Heart right ventricle (tissue), 16 donors: ENCODE measurements at regions of chr7 and their contacts with region 1.

Region 1: DNA sequence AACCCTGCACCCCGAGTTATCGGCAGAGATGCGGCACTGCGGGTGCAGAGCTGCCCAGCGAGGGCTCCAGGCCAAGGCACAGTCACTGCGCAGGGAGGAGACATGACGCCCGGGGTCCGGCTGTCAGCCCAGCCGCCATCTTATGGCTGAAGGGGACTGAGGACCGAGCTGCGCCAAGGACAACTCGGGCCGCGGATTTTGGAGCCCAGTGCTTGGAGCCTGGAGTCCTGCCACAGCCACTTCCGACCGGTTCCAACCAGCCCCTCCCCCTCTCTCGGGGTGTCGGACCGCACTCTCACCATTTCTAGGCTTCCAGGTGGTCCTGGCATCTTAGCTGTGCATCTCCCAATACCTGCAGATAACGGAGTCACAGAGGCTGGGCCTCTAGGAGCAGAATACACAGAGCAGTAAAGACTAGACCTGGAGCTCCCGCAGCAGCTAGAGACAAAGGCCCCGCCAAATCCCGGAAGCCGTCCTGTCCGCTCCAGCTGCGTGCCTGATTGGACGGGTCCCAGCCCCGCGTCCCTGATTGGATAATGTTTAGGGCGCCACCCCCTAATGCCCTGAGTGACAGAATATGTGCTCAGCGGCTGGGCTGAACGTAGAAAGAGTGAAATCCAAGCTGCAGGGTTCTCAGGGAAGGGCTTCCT is at the start of gene ZNF680:
- DNase-seq: peak; percentile 94 to 98
- ATAC-seq: peak; percentile 96 to 99 (median 98)
- H3K4me3 ChIP-seq: peak within 1 kb of the TSS; percentile 57 to 89 (median 80)
- H3K27ac ChIP-seq: peak within 1 kb of the TSS; percentile 79 to 94 (median 88)
- H3K4me1 ChIP-seq: peaks cover 6 to 48% (median 37%) of the 10 kb centered on the region in 9 donors
- H3K27me3 ChIP-seq: no peaks in the 10 kb centered on the region
- CTCF ChIP-seq: no peak
- total RNA-seq, gene ZNF680: 16.8 to 28.7 (median 21.4) TPM

Region 2: DNA sequence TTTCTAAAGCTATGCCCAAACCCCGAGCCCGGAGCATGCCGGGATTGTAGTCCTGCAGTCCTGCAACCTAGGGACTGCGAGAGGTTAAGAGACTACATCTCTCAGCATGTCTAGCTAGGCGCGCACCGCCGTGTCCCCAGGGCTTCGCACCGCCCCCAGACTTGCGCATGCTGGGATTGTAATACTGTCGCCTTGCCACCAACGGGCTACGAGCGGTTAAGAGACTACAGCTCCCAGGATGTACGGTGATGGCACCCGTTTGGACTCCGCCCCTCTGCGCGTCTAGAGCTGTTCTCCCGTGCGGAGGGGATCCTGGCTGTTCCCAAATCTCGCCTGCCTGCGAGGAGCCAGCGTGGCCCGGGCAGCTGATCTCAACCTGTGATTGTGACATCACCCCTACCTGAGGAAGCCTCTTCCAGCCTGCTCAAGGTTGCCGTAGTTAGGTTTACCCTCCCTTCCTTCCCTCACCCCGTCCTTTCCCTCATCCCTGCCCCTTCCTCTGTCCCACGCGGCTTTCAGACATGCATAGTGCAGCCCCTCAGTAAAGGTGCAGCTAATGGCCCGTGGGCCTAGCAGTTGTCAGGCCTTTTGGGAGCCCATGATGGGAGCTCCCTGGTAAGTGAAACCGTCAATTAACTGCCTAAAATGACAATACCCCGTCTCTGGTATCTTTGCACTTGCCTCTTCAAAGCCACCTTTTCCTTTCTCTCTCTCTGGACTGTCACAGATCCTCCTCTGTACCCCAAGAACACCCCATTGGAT is 255.3 kb before region 1 on chr7:
- intact Hi-C with region 1: loop called in 6 of 10 experiments (anchors 2 to 10 kb)
- DNase-seq: peak; percentile 91 to 92
- ATAC-seq: peak; percentile 96 to 100 (median 98)
- H3K4me3 ChIP-seq: peak overlapping the region; percentile 27 to 68 (median 62)
- H3K27ac ChIP-seq: peak overlapping the region; percentile 54 to 91 (median 81)
- H3K4me1 ChIP-seq: peaks cover 0 to 15% (median 6%) of the 10 kb centered on the region in 9 donors
- H3K27me3 ChIP-seq: no peaks in the 10 kb centered on the region
- CTCF ChIP-seq: peak in 1 of 9 donors; percentile 24

Region 3: DNA sequence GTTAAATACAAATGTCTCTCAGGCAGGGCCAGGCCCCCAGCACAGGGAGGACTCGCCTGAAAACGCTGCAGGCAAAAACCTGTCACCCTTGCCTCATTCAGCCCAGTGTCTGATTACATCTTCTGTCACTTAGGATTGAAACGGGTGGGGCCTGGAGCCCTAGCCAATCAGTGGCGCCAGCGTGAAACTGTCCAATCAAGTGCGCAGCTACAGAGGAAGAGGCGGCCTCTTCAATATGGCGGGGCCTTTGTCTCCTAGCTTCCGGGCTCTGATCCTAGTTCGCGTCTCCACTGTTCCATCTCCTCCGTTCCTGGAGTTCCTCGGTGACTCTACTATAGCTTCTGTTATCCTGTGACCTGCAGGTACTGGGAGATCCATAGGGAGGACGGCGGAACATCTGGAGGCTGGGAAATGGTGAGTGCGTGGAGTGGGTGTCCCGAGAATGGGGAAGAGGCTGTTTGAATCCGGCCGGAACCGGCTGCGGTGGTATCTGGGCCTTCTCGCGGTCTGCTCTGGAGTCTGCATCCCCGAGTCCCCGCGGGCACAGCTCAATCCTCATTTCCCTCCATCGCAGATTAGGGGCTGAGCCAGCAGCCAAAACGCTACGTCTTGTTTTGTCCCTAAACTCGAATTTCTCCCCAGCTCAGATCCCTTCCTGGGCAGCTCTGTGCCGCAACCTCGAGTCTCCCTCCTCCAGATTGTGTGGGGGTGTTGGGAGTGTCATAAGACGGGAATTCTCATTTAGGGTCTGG is 248.8 kb before region 1 on chr7 and contains the start of gene ZNF736:
- intact Hi-C with region 1: loop called in 5 of 10 experiments (anchors 5 to 10 kb)
- DNase-seq: peak; percentile 85 to 92
- ATAC-seq: peak; percentile 99 to 100 (median 100)
- H3K4me3 ChIP-seq: peak within 1 kb of the TSS; percentile 58 to 93 (median 80)
- H3K27ac ChIP-seq: peak within 1 kb of the TSS in 9 of 10 donors; percentile 42 to 92 (median 68)
- H3K4me1 ChIP-seq: peaks cover 3 to 26% (median 19%) of the 10 kb centered on the region in 9 donors
- H3K27me3 ChIP-seq: no peaks in the 10 kb centered on the region
- CTCF ChIP-seq: no peak
- total RNA-seq, gene ZNF736: 4.4 to 8.4 (median 6.4) TPM

Region 4: GRCh38 chr7:64463636-64464378 is 98.9 kb before region 1 on chr7:
- intact Hi-C with region 1: loop called in 1 of 10 experiments (anchors 10 kb)
- DNase-seq: peak; percentile 74 to 85
- ATAC-seq: peak; percentile 97 to 100 (median 100)
- H3K4me3 ChIP-seq: peak overlapping the region; percentile 39 to 71 (median 56)
- H3K27ac ChIP-seq: peak overlapping the region in 4 of 10 donors; percentile 19 to 51 (median 32)
- H3K4me1 ChIP-seq: no peaks in the 10 kb centered on the region
- H3K27me3 ChIP-seq: no peaks in the 10 kb centered on the region
- CTCF ChIP-seq: no peak

Region 5: DNA sequence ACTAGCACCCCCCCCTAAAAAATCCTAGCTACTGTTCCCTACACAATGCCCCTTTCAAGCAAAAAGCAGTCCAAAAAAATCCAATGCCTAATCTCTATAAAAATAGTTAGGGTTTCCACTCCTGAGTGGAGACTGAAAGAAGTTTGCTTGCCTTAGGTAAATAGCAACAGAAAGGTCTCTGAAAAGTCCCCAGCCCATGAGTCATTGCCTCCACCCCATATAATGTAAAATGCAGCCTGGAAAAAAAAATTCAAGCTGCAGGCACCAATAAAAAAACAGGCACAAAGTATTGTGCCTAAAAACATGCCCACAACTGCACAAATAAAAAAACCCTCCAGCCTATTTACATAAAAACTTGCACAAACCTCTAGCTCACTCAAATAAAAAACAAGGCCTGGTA is 47.4 kb before region 1 on chr7:
- intact Hi-C with region 1: loop called in 1 of 10 experiments (anchors 10 kb)
- DNase-seq: no peak
- ATAC-seq: no peak
- H3K4me3 ChIP-seq: no peak overlapping the region
- H3K27ac ChIP-seq: peak overlapping the region in 1 of 10 donors; percentile 22
- H3K4me1 ChIP-seq: peaks cover 0 to 14% (median 9%) of the 10 kb centered on the region in 9 donors
- H3K27me3 ChIP-seq: no peaks in the 10 kb centered on the region
- CTCF ChIP-seq: no peak

Region 6: DNA sequence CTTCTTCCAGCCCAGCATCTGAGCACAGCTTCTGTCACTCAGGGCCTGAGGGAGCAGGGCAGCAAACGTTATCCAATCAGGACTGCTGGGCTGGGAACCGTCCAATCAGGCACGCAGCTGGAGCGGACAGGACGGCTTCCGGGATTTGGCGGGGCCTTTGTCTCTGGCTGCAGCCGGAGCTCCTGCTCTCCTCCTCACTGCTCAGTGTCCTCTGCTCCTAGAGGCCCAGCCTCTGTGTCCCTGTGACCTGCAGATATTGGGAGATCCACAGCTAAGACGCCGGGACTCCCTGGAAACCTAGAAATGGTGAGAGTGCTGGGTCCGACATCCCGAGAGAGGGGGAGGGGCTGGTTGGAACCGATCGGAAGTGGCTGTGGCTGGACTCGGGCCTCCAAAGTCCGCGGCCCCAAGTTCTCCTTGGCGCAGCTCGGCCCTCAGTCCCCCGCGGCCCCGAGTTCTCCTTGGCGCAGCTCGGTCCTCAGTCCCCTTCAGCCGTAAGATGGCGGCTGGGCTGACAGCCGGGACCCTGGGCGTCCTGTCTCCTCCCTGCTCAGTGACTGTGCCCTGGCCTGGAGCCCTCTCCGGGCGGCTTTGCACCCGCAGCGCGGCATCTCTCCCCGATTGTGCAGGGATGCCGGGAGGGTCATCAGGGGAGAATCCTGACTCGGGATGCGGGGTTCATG is 103.4 kb after region 1 on chr7 and contains the start of gene ZNF107:
- intact Hi-C with region 1: loop called in 1 of 10 experiments (anchors 10 kb)
- DNase-seq: peak; percentile 91 to 95
- ATAC-seq: peak; percentile 99 to 100 (median 100)
- H3K4me3 ChIP-seq: peak within 1 kb of the TSS; percentile 65 to 91 (median 82)
- H3K27ac ChIP-seq: peak within 1 kb of the TSS in 9 of 10 donors; percentile 69 to 84 (median 73)
- H3K4me1 ChIP-seq: peaks cover 0 to 25% (median 11%) of the 10 kb centered on the region in 9 donors
- H3K27me3 ChIP-seq: no peaks in the 10 kb centered on the region
- CTCF ChIP-seq: no peak
- total RNA-seq, gene ZNF107: 1.3 to 2.8 (median 1.9) TPM